Naive thymus-derived CD4-positive, alpha-beta T cell (primary cell): ENCODE measurements at regions of chr18 and their contacts with region 1.

Region 1: DNA sequence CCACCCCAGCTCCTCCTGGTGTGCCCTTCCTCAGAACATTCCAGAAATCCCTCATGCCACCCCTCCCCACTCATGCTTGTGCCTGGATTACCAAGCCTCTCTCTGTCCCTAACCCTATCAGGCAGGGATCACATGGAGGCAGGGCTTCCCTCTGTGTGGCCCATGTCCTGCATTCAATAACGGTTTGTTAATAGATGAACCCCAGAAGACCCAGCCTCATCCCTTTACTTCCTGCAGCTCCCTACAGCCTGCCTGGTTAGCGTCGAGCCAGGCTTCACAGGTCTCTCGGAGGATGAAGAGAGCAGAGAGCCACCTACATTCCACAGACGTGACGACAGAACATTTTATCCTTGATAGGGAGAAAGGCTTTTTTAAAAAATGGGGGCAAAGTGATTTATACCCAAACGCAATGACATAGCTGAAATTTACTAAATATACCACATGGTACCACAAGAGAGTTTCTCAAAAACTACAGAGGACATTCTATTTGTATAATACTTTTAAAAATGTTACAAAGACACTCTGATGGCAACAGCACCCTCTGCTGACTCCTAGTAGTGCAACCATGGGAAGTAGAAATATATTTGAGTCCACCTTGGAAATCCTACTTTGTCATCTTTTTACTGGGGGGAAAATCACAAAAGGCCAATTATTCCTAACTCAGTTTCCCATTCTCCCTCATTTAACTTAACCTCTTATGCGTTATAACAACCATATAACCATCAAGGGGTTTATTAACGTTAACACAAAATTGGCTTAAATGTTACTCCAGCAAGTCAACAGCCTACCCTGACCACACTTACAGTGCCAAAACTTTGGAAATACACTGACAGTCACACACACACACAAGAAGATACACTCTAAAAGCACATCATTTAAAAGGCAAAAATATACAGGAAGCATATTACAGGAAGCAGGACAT is 30.7 kb downstream of the FBXO15 start:
- DNase-seq: peak in 6 of 9 donors; percentile 13 to 54 (median 48)
- ATAC-seq: no peak
- H3K4me3 ChIP-seq: no peak overlapping the region
- H3K4me3 Mint-ChIP-seq: no peak overlapping the region
- H3K27ac ChIP-seq: no peak overlapping the region
- H3K27ac Mint-ChIP-seq: no peak overlapping the region
- H3K4me1 ChIP-seq: no peaks in the 10 kb centered on the region
- H3K4me1 Mint-ChIP-seq: peaks cover 3 to 19% (median 11%) of the 10 kb centered on the region in 7 donors
- H3K27me3 ChIP-seq: no peaks in the 10 kb centered on the region
- H3K27me3 Mint-ChIP-seq: peaks cover 0 to 4% (median 0%) of the 10 kb centered on the region in 5 donors

Region 2: DNA sequence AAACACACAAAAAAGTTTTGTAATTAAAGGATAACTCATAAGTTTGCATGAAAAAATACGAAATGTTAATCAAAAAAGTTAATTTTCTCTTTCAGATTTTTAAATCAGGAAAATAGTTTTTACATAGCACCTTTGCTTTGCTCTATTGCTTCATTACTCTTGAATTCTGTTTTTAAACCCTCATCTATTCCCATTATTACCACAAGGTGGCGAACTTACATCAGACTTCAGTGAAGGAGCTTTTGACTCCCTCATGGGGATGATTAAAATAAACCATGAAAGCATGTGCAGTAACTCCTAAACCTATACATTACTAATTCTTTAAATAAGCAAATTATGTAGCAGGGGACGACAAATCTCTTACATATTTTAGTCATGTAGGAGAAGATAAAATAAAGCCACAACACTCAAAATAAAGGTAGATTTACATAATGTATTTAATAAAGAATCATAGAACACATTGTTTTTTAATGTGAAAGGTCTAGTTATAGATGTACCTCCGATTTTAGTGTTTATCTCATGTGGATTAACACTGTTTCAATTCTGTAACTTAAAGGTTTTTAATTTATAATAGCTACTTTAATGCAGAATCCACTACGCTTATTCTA is 1354.3 kb before region 1 on chr18:
- CTCF ChIA-PET with region 1: no interaction called
- POLR2A ChIA-PET with region 1: no interaction called
- intact Hi-C with region 1: loop called in 1 of 2 experiments (anchors 2 kb)
- DNase-seq: peak in 4 of 9 donors; percentile 2 to 26 (median 12)
- ATAC-seq: no peak
- H3K4me3 ChIP-seq: no peak overlapping the region
- H3K4me3 Mint-ChIP-seq: no peak overlapping the region
- H3K27ac ChIP-seq: no peak overlapping the region
- H3K27ac Mint-ChIP-seq: no peak overlapping the region
- H3K4me1 ChIP-seq: no peaks in the 10 kb centered on the region
- H3K4me1 Mint-ChIP-seq: no peaks in the 10 kb centered on the region
- H3K27me3 ChIP-seq: no peaks in the 10 kb centered on the region
- H3K27me3 Mint-ChIP-seq: peaks cover 0 to 5% (median 0%) of the 10 kb centered on the region in 5 donors

Region 3: DNA sequence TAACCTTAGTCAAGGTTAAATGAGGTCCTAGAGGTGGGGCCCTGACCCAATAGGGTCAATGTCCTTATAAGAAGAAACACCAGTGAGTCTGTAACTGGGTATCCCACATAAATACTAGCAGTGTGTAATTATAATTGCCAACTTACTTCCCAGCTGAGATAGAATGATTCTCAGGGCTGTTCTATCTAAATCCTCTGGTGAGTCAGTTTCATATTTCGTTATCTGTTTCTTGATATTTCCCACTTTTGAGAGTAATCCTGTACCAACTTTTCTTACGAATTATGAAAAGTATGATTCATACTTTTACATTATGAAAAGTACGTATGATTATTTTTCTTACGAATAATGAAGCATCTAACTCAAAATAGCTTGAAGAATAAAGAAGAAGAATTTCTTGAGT is 702.3 kb before region 1 on chr18:
- CTCF ChIA-PET with region 1: no interaction called
- POLR2A ChIA-PET with region 1: no interaction called
- intact Hi-C with region 1: no loop called
- DNase-seq: no peak
- ATAC-seq: no peak
- H3K4me3 ChIP-seq: no peak overlapping the region
- H3K4me3 Mint-ChIP-seq: no peak overlapping the region
- H3K27ac ChIP-seq: no peak overlapping the region
- H3K27ac Mint-ChIP-seq: no peak overlapping the region
- H3K4me1 ChIP-seq: no peaks in the 10 kb centered on the region
- H3K4me1 Mint-ChIP-seq: no peaks in the 10 kb centered on the region
- H3K27me3 ChIP-seq: no peaks in the 10 kb centered on the region
- H3K27me3 Mint-ChIP-seq: no peaks in the 10 kb centered on the region

Region 4: GRCh38 chr18:73891572-73892421 is 225.1 kb before region 1 on chr18:
- CTCF ChIA-PET with region 1: no interaction called
- POLR2A ChIA-PET with region 1: no interaction called
- intact Hi-C with region 1: loop called in 1 of 2 experiments (anchors 10 kb)
- DNase-seq: no peak
- ATAC-seq: no peak
- H3K4me3 ChIP-seq: no peak overlapping the region
- H3K4me3 Mint-ChIP-seq: no peak overlapping the region
- H3K27ac ChIP-seq: no peak overlapping the region
- H3K27ac Mint-ChIP-seq: no peak overlapping the region
- H3K4me1 ChIP-seq: no peaks in the 10 kb centered on the region
- H3K4me1 Mint-ChIP-seq: no peaks in the 10 kb centered on the region
- H3K27me3 ChIP-seq: no peaks in the 10 kb centered on the region
- H3K27me3 Mint-ChIP-seq: peaks cover 0 to 17% (median 0%) of the 10 kb centered on the region in 5 donors

Region 5: GRCh38 chr18:74040459-74041332 is 76.2 kb before region 1 on chr18:
- CTCF ChIA-PET with region 1: interaction called, 3 read pairs
- POLR2A ChIA-PET with region 1: no interaction called
- intact Hi-C with region 1: loop called in 1 of 2 experiments (anchors 1 kb)
- DNase-seq: peak; percentile 32 to 81 (median 62)
- ATAC-seq: peak; percentile 68
- H3K4me3 ChIP-seq: no peak overlapping the region
- H3K4me3 Mint-ChIP-seq: no peak overlapping the region
- H3K27ac ChIP-seq: no peak overlapping the region
- H3K27ac Mint-ChIP-seq: no peak overlapping the region
- H3K4me1 ChIP-seq: no peaks in the 10 kb centered on the region
- H3K4me1 Mint-ChIP-seq: peaks cover 0 to 5% (median 0%) of the 10 kb centered on the region in 7 donors
- H3K27me3 ChIP-seq: no peaks in the 10 kb centered on the region
- H3K27me3 Mint-ChIP-seq: no peaks in the 10 kb centered on the region

Region 6: DNA sequence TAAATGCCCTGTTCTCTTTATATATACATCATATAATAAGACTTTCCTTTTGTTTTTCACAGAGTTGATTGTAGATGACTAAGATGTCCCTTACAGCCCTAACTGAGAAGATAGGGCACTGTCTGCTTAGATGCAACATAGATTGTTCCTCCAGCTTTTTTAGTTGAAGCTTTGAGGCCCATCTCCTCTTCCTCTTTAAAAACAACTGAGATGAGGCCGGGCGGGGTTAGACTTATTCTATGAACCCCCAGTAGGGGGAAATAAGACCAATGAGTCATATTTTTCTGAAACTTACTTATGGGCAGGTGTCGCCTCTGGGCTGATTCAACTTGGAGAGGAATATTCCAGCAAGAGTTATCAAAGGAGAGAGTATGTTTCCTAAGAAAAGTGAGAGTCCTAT is 53.9 kb before region 1 on chr18:
- CTCF ChIA-PET with region 1: interaction called, 4 read pairs
- POLR2A ChIA-PET with region 1: no interaction called
- intact Hi-C with region 1: loop called in 1 of 2 experiments (anchors 1 kb)
- DNase-seq: peak in 2 of 9 donors; percentile 17 to 48
- ATAC-seq: no peak
- H3K4me3 ChIP-seq: no peak overlapping the region
- H3K4me3 Mint-ChIP-seq: peak overlapping the region in 2 of 10 donors; percentile 18 to 21
- H3K27ac ChIP-seq: no peak overlapping the region
- H3K27ac Mint-ChIP-seq: peak overlapping the region in 6 of 9 donors; percentile 25 to 73 (median 56)
- H3K4me1 ChIP-seq: peaks cover 0 to 24% of the 10 kb centered on the region in 2 donors
- H3K4me1 Mint-ChIP-seq: peaks cover 0 to 47% (median 37%) of the 10 kb centered on the region in 7 donors
- H3K27me3 ChIP-seq: no peaks in the 10 kb centered on the region
- H3K27me3 Mint-ChIP-seq: peaks cover 0 to 23% (median 0%) of the 10 kb centered on the region in 5 donors

Region 7: GRCh38 chr18:74196220-74197119 is 79.6 kb after region 1 on chr18:
- CTCF ChIA-PET with region 1: no interaction called
- POLR2A ChIA-PET with region 1: no interaction called
- intact Hi-C with region 1: no loop called
- DNase-seq: peak in 7 of 9 donors; percentile 51 to 80 (median 71)
- ATAC-seq: peak; percentile 95
- H3K4me3 ChIP-seq: peak overlapping the region; percentile 55
- H3K4me3 Mint-ChIP-seq: peak overlapping the region; percentile 63 to 90 (median 86)
- H3K27ac ChIP-seq: peak overlapping the region; percentile 63
- H3K27ac Mint-ChIP-seq: peak overlapping the region in 8 of 9 donors; percentile 51 to 90 (median 79)
- H3K4me1 ChIP-seq: no peaks in the 10 kb centered on the region
- H3K4me1 Mint-ChIP-seq: peaks cover 0 to 7% (median 0%) of the 10 kb centered on the region in 7 donors
- H3K27me3 ChIP-seq: no peaks in the 10 kb centered on the region
- H3K27me3 Mint-ChIP-seq: peaks cover 1 to 11% (median 2%) of the 10 kb centered on the region in 5 donors